Activated CD8-positive, alpha-beta memory T cell treated with anti-CD3 and anti-CD28 coated beads, Interleukin-2, amount 10 ng/mL, durations not matched to agents 7 days and 5 days (primary cell): ENCODE measurements at regions of chr15 and their contacts with region 1.

Region 1: GRCh38 chr15:93087825-93088199 is 1.2 kb downstream of the RGMA start:
- DNase-seq: peak; percentile 80
- ATAC-seq: peak; percentile 59
- H3K4me3 Mint-ChIP-seq: peak overlapping the region; percentile 68
- H3K27ac Mint-ChIP-seq: no peak overlapping the region
- H3K4me1 Mint-ChIP-seq: peaks cover 14% of the 10 kb centered on the region
- H3K27me3 Mint-ChIP-seq: peaks cover 73% of the 10 kb centered on the region

Region 2: GRCh38 chr15:93072411-93073394 is 15.1 kb before region 1 on chr15:
- CTCF ChIA-PET with region 1: interaction called, 20 read pairs
- DNase-seq: no peak
- ATAC-seq: peak; percentile 45
- H3K4me3 Mint-ChIP-seq: peak overlapping the region; percentile 26
- H3K27ac Mint-ChIP-seq: no peak overlapping the region
- H3K4me1 Mint-ChIP-seq: peaks cover 13% of the 10 kb centered on the region
- H3K27me3 Mint-ChIP-seq: peaks cover 77% of the 10 kb centered on the region

Region 3: DNA sequence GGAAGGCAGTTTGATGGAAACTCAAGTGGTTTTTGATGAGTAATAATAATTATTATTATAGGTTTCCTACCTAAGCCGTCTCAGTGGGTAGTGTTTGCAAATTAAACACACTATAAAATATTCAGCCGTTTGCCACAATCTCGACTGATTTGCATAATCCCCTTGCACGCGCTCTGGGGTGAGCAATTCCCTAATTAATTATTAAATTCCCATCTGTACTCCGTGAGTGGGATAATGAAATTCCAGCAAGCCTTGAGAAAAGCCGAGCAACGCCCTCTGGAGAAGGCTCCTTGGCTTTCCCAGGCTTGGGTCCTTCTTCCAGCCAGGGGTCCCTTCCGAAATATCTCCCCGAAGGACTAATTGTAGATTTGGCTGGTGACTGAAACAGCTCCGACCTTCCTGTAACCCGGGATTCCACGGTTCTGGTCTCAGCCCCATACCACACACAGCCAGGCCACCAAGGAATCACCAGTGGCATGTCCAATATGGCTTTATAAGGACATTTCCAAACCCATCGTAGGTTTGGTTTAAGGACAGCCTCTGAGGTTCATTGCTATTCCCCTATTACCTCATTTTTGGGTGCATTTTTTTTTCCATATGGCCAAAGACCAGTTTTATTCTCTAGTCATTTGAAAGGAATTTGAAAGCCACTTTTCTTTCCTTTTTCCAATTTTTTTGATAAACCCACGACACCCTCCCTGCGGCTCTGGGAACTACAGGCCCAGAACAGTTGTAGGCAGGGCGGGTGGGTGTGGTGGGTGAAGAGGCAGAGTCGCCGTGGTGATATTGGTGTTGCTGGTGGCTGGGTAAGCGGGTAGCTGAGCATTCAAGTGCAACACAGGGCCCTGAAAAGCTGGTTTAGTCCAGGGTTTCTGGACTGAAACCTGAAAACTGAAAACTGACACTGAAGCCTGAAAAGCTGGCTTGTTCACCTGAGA is 34.4 kb after region 1 on chr15:
- CTCF ChIA-PET with region 1: interaction called, 13 read pairs
- DNase-seq: no peak
- ATAC-seq: no peak
- H3K4me3 Mint-ChIP-seq: no peak overlapping the region
- H3K27ac Mint-ChIP-seq: no peak overlapping the region
- H3K4me1 Mint-ChIP-seq: peaks cover 12% of the 10 kb centered on the region
- H3K27me3 Mint-ChIP-seq: peaks cover 6% of the 10 kb centered on the region

Region 4: DNA sequence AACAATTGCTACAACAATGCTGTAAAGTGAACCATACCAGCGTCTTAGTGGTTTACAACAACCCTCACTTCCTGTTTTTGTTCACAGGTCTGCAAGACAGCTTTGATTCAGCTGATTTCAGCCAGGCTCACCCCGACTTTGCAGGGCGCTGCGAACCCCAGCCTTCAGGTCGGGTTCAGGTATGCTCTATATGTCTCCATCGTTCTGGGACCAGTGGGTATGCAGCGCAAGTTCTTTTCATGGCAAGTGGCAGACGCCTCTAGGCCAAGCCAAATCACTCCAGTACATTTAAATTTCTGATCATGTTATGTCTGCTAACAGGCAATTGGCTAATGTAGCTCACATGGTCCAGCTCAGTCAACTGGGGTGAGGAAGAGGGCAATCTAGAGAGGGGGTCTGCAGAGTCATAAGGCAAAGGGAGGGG is 53.6 kb after region 1 on chr15:
- CTCF ChIA-PET with region 1: interaction called, 13 read pairs
- DNase-seq: peak; percentile 74
- ATAC-seq: peak; percentile 92
- H3K4me3 Mint-ChIP-seq: peak overlapping the region; percentile 59
- H3K27ac Mint-ChIP-seq: peak overlapping the region; percentile 68
- H3K4me1 Mint-ChIP-seq: peaks cover 20% of the 10 kb centered on the region
- H3K27me3 Mint-ChIP-seq: peaks cover 28% of the 10 kb centered on the region